Activated CD8-positive, alpha-beta memory T cell treated with anti-CD3 and anti-CD28 coated beads, Interleukin-2, amount 10 ng/mL, durations not matched to agents 7 days and 5 days (primary cell): ENCODE measurements at regions of chr3 and their contacts with region 1.

Region 1: GRCh38 chr3:172673210-172673679 is 37.6 kb downstream of the NCEH1 start:
- DNase-seq: peak; percentile 86
- ATAC-seq: peak; percentile 81
- H3K4me3 Mint-ChIP-seq: no peak overlapping the region
- H3K27ac Mint-ChIP-seq: no peak overlapping the region
- H3K4me1 Mint-ChIP-seq: peaks cover 17% of the 10 kb centered on the region
- H3K27me3 Mint-ChIP-seq: no peaks in the 10 kb centered on the region

Region 2: DNA sequence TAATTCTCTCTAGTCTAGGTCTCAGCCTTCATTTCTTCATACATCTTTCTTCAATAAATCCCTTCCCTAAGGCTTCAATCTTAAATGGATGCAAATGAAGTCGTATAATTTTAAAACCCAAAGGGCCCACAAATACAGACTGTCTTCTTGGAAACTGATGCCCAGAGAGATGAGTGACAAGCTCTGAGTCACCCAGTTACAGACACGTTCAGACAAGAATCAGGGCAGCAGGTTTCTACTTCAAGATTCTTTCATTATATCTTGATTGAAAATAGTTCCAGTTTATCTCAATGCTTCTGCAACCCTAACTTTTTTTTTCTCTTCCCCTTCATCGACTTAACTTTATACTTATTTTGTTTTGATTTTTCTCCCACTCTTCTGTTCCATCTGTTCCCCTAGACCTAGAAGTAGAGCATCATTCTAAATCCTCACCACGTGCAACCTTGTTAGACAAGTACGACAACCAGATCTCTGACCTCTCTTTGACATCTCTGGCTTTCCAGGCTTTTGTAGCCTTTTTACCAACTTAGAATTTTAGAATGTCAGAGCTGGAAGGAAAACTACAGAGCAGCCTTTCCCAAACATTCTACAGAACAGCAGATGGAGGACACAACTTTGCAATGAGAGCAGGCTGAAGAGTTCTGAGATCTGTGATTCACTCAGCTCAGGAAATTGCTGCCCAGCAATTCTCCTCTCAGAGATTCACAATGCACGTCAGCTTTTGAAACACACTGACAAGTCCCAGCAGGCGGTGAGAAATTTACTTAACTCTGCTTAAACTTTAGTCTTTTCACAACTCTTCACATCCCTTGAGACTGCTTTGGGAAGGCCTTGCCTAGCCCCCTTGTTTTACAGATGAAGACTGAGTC is 12.3 kb after region 1 on chr3:
- CTCF ChIA-PET with region 1: interaction called, 24 read pairs
- DNase-seq: no peak
- ATAC-seq: peak; percentile 73
- H3K4me3 Mint-ChIP-seq: no peak overlapping the region
- H3K27ac Mint-ChIP-seq: peak overlapping the region; percentile 65
- H3K4me1 Mint-ChIP-seq: peaks cover 29% of the 10 kb centered on the region
- H3K27me3 Mint-ChIP-seq: no peaks in the 10 kb centered on the region

Region 3: GRCh38 chr3:172701751-172702150 is 28.5 kb after region 1 on chr3:
- CTCF ChIA-PET with region 1: interaction called, 10 read pairs
- DNase-seq: no peak
- ATAC-seq: no peak
- H3K4me3 Mint-ChIP-seq: no peak overlapping the region
- H3K27ac Mint-ChIP-seq: no peak overlapping the region
- H3K4me1 Mint-ChIP-seq: peaks cover 10% of the 10 kb centered on the region
- H3K27me3 Mint-ChIP-seq: no peaks in the 10 kb centered on the region

Region 4: GRCh38 chr3:172710664-172711453 is 37.6 kb after region 1 on chr3 and contains the start of gene NCEH1:
- CTCF ChIA-PET with region 1: interaction called, 18 read pairs
- DNase-seq: peak; percentile 91
- ATAC-seq: peak; percentile 98
- H3K4me3 Mint-ChIP-seq: peak within 1 kb of the TSS; percentile 96
- H3K27ac Mint-ChIP-seq: peak within 1 kb of the TSS; percentile 80
- H3K4me1 Mint-ChIP-seq: peaks cover 22% of the 10 kb centered on the region
- H3K27me3 Mint-ChIP-seq: peaks cover 5% of the 10 kb centered on the region
- total RNA-seq, gene NCEH1: 8.8 to 11.4 TPM

Region 5: DNA sequence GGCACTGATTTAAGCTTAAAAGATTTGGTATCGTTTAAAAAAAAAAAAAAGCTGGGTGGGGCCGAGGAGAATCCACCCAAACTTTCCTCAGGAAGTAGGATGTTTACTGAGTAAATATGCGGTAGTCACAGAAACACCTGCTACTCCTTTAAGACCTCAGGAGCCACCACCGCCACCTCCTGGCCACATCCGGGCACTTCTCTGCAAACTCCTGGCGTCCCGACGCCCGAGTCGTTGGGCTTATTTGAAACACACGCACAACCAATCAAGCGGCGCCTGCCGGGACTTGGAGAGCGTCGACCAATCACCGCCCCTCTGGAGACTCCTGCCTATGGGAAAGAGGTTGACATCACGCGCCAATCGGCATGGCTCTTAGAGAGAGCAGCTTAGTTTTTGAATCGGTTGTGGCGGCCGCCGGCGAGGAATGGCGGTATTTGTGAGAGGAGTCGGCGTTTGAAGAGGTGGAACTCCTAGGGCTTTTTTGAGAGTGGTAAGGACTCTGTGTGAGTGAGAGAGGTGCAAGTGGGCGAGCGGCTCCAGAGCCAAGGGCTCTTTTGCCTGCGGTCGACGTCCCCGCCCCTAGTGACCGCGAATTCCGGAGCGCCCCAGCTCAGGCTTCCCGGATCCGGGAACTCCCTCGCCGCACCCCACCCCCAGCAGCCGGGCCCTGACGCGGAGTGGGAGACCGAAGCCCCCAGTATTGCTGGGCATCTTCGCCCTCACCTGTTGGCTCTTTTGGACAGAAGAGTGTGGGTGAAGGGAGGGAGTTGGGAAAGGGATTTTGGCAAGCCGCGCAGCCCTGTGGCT is 77.3 kb after region 1 on chr3 and contains the start of gene ECT2:
- CTCF ChIA-PET with region 1: interaction called, 10 read pairs
- DNase-seq: peak; percentile 100
- ATAC-seq: peak; percentile 98
- H3K4me3 Mint-ChIP-seq: peak within 1 kb of the TSS; percentile 88
- H3K27ac Mint-ChIP-seq: peak within 1 kb of the TSS; percentile 98
- H3K4me1 Mint-ChIP-seq: peaks cover 36% of the 10 kb centered on the region
- H3K27me3 Mint-ChIP-seq: peaks cover 4% of the 10 kb centered on the region
- total RNA-seq, gene ECT2: 73.4 to 82.8 TPM

Region 6: DNA sequence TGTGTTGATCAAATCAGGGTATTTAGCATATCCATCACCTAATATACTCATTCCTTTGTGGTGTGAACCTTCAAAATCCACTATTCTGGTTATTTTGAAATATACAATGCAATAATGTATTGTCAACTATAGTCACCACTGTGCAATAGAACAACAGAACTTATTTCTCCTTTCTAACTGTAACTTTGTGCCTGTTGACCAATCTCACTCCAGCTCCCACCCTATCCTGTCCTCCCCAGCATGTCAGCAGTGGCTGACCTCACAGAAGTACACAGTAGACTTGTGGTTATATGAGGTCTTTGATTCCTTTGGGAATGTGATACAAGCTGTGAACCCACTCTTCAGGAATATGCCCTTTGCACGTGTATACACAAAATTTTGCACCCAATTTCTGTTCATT is 141.5 kb after region 1 on chr3:
- CTCF ChIA-PET with region 1: no interaction called
- DNase-seq: no peak
- ATAC-seq: no peak
- H3K4me3 Mint-ChIP-seq: no peak overlapping the region
- H3K27ac Mint-ChIP-seq: no peak overlapping the region
- H3K4me1 Mint-ChIP-seq: no peaks in the 10 kb centered on the region
- H3K27me3 Mint-ChIP-seq: no peaks in the 10 kb centered on the region